ENCODE measurements at regions of chr15 and their contacts with region 1.

Region 1: DNA sequence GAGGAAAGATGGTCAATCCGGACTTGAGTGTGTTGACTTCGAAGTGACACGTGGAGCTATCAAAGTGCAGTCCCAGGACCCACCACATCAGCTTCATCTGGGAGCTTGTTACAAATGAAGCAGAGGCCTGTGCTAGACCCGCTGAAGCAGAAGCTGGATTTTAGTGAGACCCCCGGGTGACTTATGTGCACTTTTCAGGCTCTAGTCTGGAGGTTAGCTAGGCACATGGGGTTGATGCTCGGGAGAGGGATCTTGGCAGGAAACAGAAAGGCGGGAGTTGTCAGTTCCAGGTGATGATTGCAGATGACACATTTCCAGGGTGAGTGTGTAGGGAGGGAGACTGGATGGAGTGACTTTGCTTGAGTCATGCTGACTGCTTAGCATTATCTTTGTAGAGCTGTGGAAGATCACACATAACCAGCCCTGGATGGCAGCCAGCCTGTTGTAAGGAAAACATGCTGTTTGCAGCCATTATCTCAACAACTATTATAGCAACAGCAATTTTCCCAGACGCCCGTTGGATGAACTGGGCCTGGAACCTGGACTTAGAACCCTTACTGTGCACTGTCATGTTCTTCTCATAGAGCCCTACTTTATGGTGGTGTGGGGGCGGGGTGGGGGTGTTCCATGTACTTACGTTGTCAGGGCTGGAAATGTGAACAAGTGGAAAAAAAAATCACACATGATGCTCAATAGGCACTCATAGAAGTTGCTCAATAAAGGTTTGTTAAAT is 122.4 kb downstream of the THSD4 start:
- DNase-seq: peak; percentile 95
- ATAC-seq: peak; percentile 96
- H3K4me3 ChIP-seq: no peak overlapping the region
- H3K27ac ChIP-seq: peak overlapping the region; percentile 92
- H3K4me1 ChIP-seq: peaks cover 29% of the 10 kb centered on the region
- H3K27me3 ChIP-seq: no peaks in the 10 kb centered on the region
- CTCF ChIP-seq: no peak

Region 2: GRCh38 chr15:71278989-71279756 is 41.6 kb after region 1 on chr15:
- CTCF ChIA-PET with region 1: no interaction called
- POLR2A ChIA-PET with region 1: no interaction called
- intact Hi-C with region 1: loop called (anchors 5 kb)
- DNase-seq: peak; percentile 95
- ATAC-seq: peak; percentile 20; the same call in 1 of the 2 replicates
- H3K4me3 ChIP-seq: no peak overlapping the region
- H3K27ac ChIP-seq: peak overlapping the region; percentile 96
- H3K4me1 ChIP-seq: peaks cover 67% of the 10 kb centered on the region
- H3K27me3 ChIP-seq: no peaks in the 10 kb centered on the region
- CTCF ChIP-seq: no peak